Common myeloid progenitor, CD34-positive (primary cell): ENCODE measurements at regions of chr5 and their contacts with region 1.

Region 1: GRCh38 chr5:67032921-67033664 is 163.5 kb downstream of the CD180 start:
- DNase-seq: peak; percentile 75 to 88 (median 88)
- H3K4me3 ChIP-seq: no peak overlapping the region
- H3K27ac ChIP-seq: peak overlapping the region in 1 of 2 experiments; percentile 40
- H3K4me1 ChIP-seq: peaks cover 17 to 75% (median 42%) of the 10 kb centered on the region in 4 experiments
- H3K27me3 ChIP-seq: no peaks in the 10 kb centered on the region

Region 2: GRCh38 chr5:67015541-67016191 is 17.4 kb before region 1 on chr5:
- CTCF ChIA-PET with region 1: interaction called, 20 read pairs
- POLR2A ChIA-PET with region 1: interaction called, 4 read pairs
- DNase-seq: peak in 2 of 3 donors; percentile 44 to 67
- H3K4me3 ChIP-seq: peak overlapping the region in 4 of 7 experiments; percentile 24 to 66 (median 54)
- H3K27ac ChIP-seq: peak overlapping the region; percentile 6 to 45
- H3K4me1 ChIP-seq: peaks cover 17 to 63% (median 29%) of the 10 kb centered on the region in 4 experiments
- H3K27me3 ChIP-seq: no peaks in the 10 kb centered on the region

Region 3: GRCh38 chr5:67065237-67065636 is 32.1 kb after region 1 on chr5:
- CTCF ChIA-PET with region 1: no interaction called
- POLR2A ChIA-PET with region 1: no interaction called
- DNase-seq: peak in 2 of 3 donors; percentile 28 to 45
- H3K4me3 ChIP-seq: no peak overlapping the region
- H3K27ac ChIP-seq: no peak overlapping the region
- H3K4me1 ChIP-seq: peaks cover 0 to 27% (median 6%) of the 10 kb centered on the region in 4 experiments
- H3K27me3 ChIP-seq: no peaks in the 10 kb centered on the region